Activated CD4-positive, alpha-beta T cell treated with anti-CD3 and anti-CD28 coated beads, Interleukin-2, amount 10 ng/mL, durations not matched to agents 24 days and 14 days (primary cell): ENCODE measurements at regions of chr10 and their contacts with region 1.

Region 1: GRCh38 chr10:61987951-61988379 is 86.5 kb downstream of the ARID5B start:
- DNase-seq: peak; percentile 84
- H3K4me3 Mint-ChIP-seq: peak overlapping the region; percentile 72
- H3K27ac Mint-ChIP-seq: peak overlapping the region; percentile 96
- H3K4me1 Mint-ChIP-seq: peaks cover 71% of the 10 kb centered on the region
- H3K27me3 Mint-ChIP-seq: no peaks in the 10 kb centered on the region

Region 2: DNA sequence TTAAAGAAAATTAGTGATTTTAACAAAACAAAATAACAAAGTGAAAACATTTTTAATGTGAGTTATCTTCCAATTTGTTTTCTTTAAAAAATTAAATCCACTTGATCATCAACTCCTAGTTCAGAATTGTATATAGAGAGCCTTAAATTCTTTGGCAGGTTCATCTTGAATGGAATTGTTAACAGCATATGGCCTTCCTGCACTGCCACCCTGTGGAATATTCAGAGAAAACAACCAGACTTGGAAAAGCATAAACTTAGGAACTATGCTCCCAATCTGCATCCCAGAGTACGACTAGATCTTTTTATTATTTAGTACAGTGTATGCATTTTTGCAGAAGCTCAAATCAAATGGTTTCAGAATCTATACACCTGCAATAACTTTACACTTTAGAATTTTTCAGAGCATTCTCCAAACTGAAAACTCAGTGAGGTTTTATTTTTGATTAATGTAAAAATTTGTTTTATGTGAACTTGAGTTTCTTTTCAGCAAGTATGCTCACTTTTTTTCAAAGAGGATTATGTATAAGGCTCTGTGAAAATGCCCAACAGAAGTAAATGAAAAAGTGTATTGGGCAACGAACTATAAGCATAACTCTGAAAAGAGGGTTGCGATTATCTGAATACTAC is 1553.4 kb before region 1 on chr10:
- intact Hi-C with region 1: no loop called
- DNase-seq: no peak
- H3K4me3 Mint-ChIP-seq: no peak overlapping the region
- H3K27ac Mint-ChIP-seq: no peak overlapping the region
- H3K4me1 Mint-ChIP-seq: peaks cover 2% of the 10 kb centered on the region
- H3K27me3 Mint-ChIP-seq: no peaks in the 10 kb centered on the region

Region 3: DNA sequence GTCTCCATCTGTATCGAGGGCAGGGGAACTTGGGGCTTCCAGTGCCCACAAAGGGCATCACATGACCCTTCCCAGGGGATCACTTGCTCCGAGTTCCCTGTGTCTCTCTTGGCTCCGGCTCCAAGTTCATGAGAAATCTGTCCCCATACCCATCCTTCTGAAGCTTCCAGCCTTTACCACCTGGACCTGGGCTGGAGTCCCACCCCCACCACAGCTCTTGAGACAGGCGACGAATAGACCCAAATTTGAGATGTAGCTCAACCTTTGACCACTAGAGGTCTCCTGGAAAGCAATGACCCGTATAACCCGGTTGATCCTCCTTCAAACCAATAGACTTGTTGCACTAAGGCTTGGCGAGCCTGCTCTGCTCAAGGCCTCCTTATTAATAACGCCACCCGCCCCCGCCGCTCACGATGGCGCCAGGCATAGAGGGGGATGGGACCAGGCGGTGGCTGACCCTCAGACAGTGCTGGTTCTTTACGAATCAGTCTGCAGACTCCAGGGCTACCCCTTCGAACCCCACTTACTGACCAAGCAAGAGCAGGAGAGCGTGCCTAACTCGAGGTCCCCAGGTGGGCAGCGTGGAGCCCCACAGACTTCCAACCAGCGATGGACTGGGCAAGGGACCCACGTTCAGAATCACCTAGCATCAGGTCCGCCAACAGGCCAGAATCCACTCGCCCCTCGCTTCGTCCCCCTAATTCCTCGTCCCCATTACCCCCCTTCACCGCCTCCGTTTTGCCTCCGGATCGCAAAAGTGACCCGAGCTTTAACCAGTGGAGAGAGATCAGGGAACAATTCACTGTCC is 90.9 kb before region 1 on chr10:
- intact Hi-C with region 1: loop called (anchors 1 kb)
- DNase-seq: peak; percentile 91
- H3K4me3 Mint-ChIP-seq: peak overlapping the region; percentile 92
- H3K27ac Mint-ChIP-seq: peak overlapping the region; percentile 93
- H3K4me1 Mint-ChIP-seq: peaks cover 36% of the 10 kb centered on the region
- H3K27me3 Mint-ChIP-seq: no peaks in the 10 kb centered on the region

Region 4: DNA sequence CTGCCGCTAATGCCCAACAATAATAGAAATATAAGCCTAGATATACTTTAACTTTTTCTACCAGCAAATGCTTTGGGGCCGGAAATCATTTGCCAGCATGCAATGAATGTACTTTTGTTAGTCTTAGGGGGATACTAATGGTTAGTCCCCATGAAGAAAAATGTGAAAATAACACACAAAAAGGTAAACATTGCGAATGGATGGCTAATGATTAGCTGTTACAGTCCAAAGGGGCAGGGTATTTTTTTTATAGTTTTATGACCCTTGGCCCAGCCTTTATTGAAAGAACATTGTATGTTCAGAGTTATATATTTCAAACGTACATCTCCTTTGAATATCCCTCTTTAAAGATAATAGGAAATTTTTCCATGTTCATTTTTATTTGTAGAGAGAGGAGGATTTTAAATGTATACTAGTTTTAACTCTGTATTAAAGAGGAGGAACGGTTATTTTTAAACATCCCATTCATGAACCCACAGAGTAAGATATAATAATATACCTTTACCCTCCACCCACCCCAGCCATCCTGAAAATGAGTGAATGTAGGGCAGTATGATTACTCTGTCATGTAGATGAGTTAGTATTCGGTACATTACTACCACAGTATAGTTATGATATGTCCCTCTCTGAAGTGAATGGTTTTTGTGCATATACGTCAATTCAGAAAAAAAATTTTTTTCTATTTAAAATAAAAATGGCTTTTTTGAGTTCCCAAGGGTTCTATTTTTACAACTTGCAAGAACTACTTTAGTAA is 22.8 kb before region 1 on chr10:
- intact Hi-C with region 1: loop called (anchors 1 kb)
- DNase-seq: no peak
- H3K4me3 Mint-ChIP-seq: no peak overlapping the region
- H3K27ac Mint-ChIP-seq: peak overlapping the region; percentile 48
- H3K4me1 Mint-ChIP-seq: peaks cover 75% of the 10 kb centered on the region
- H3K27me3 Mint-ChIP-seq: no peaks in the 10 kb centered on the region